CD8-positive, alpha-beta memory T cell (primary cell): ENCODE measurements at regions of chr4 and their contacts with region 1.

Region 1: DNA sequence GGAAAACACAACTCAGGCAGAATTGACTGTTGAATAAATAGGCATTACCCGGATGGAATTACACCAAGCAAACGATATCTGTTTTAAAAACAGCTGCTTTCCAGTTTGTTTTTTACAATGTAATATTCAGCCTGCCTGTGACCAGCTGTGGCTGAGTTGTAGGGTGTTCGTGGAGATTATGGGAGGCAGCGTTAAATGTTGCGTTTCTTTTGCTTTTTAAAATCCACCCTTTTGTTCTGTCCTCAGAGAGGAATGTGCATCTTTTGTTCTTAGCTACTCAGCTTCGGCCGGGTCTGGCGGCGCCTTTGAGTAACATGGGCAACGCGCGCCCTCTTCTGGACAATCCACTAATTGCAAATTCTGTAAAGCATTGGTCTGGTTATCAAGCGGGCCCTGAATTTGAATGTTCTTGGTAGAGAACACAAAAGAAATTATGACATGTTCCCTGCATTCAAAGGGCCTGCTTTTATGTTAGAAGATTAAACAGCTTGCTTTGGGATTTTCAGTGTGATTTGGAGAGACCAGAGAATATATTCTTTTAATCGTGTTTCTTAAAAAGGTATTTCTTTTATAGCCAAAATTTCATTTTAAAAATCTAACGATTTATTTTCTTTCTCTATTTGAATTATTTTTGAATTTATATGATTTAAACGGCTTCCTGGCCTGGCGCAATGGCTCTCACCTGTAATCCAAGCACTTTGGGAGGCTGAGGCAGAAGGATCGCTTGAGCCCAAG is 76.3 kb upstream of the TRIM2 start:
- DNase-seq: peak; percentile 71 to 83 (median 75)
- H3K4me3 ChIP-seq: no peak overlapping the region
- H3K4me3 Mint-ChIP-seq: no peak overlapping the region
- H3K27ac ChIP-seq: no peak overlapping the region
- H3K27ac Mint-ChIP-seq: peak overlapping the region in 2 of 8 donors; percentile 8 to 71
- H3K4me1 ChIP-seq: no peaks in the 10 kb centered on the region
- H3K4me1 Mint-ChIP-seq: peaks cover 2 to 5% (median 5%) of the 10 kb centered on the region in 3 donors
- H3K27me3 ChIP-seq: no peaks in the 10 kb centered on the region
- H3K27me3 Mint-ChIP-seq: no peaks in the 10 kb centered on the region

Region 2: GRCh38 chr4:152779513-152780266 is 348.2 kb before region 1 on chr4 and contains the starts of genes ARFIP1 and TIGD4:
- CTCF ChIA-PET with region 1: interaction called, 12 read pairs
- POLR2A ChIA-PET with region 1: no interaction called
- DNase-seq: peak; percentile 89 to 96 (median 93)
- H3K4me3 ChIP-seq: peak within 1 kb of the TSS; percentile 81
- H3K4me3 Mint-ChIP-seq: peak within 1 kb of the TSS; percentile 95 to 100 (median 99)
- H3K27ac ChIP-seq: peak within 1 kb of the TSS; percentile 84
- H3K27ac Mint-ChIP-seq: peak within 1 kb of the TSS; percentile 92 to 99 (median 98)
- H3K4me1 ChIP-seq: peaks cover 25% of the 10 kb centered on the region
- H3K4me1 Mint-ChIP-seq: peaks cover 37 to 60% (median 54%) of the 10 kb centered on the region in 3 donors
- H3K27me3 ChIP-seq: no peaks in the 10 kb centered on the region
- H3K27me3 Mint-ChIP-seq: peaks cover 0 to 4% of the 10 kb centered on the region in 2 donors
- total RNA-seq, gene ARFIP1: 13.1 to 14.0 TPM
- total RNA-seq, gene TIGD4: 0.60 to 0.68 TPM

Region 3: DNA sequence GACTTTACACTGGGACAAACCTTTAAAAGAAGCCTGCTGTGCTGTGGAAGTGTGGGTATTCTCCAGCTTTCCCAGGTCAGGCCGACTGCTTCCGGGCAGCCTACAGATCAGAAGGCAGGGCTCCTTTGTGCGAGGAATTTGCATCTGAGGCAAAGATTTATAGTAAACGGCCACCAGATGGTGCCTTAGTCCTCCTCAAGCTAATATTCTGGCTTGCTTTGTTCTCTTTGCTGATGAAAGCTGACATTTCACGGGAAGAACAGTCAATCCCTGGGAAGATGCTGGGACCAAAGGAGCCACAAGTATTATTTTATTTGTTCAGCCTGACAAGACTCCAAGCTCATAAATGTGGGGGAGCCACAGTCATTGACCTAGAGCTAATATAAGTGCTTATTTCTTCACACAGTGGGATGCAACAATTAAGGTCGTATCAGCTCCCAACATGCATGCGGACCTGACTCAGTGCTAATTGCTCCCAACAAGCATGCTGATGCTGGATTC is 44.4 kb before region 1 on chr4:
- CTCF ChIA-PET with region 1: interaction called, 236 read pairs
- POLR2A ChIA-PET with region 1: interaction called, 11 read pairs
- DNase-seq: peak in 4 of 5 donors; percentile 22 to 59 (median 48)
- H3K4me3 ChIP-seq: no peak overlapping the region
- H3K4me3 Mint-ChIP-seq: peak overlapping the region in 6 of 7 donors; percentile 35 to 76 (median 54)
- H3K27ac ChIP-seq: no peak overlapping the region
- H3K27ac Mint-ChIP-seq: peak overlapping the region in 3 of 8 donors; percentile 43 to 84 (median 71)
- H3K4me1 ChIP-seq: peaks cover 41% of the 10 kb centered on the region
- H3K4me1 Mint-ChIP-seq: peaks cover 22 to 43% (median 30%) of the 10 kb centered on the region in 3 donors
- H3K27me3 ChIP-seq: no peaks in the 10 kb centered on the region
- H3K27me3 Mint-ChIP-seq: peaks cover 10 to 30% of the 10 kb centered on the region in 2 donors

Region 4: GRCh38 chr4:153095448-153096204 is 32.3 kb before region 1 on chr4:
- CTCF ChIA-PET with region 1: interaction called, 36 read pairs
- POLR2A ChIA-PET with region 1: no interaction called
- DNase-seq: no peak
- H3K4me3 ChIP-seq: no peak overlapping the region
- H3K4me3 Mint-ChIP-seq: no peak overlapping the region
- H3K27ac ChIP-seq: no peak overlapping the region
- H3K27ac Mint-ChIP-seq: peak overlapping the region in 1 of 8 donors; percentile 56
- H3K4me1 ChIP-seq: peaks cover 5% of the 10 kb centered on the region
- H3K4me1 Mint-ChIP-seq: peaks cover 3 to 11% (median 4%) of the 10 kb centered on the region in 3 donors
- H3K27me3 ChIP-seq: no peaks in the 10 kb centered on the region
- H3K27me3 Mint-ChIP-seq: peaks cover 0 to 2% of the 10 kb centered on the region in 2 donors

Region 5: GRCh38 chr4:153643406-153644383 is 515.8 kb after region 1 on chr4:
- CTCF ChIA-PET with region 1: interaction called, 14 read pairs
- POLR2A ChIA-PET with region 1: no interaction called
- DNase-seq: peak in 2 of 5 donors; percentile 44 to 60
- H3K4me3 ChIP-seq: no peak overlapping the region
- H3K4me3 Mint-ChIP-seq: peak overlapping the region in 2 of 7 donors; percentile 7 to 9
- H3K27ac ChIP-seq: no peak overlapping the region
- H3K27ac Mint-ChIP-seq: peak overlapping the region in 3 of 8 donors; percentile 5 to 41 (median 15)
- H3K4me1 ChIP-seq: peaks cover 4% of the 10 kb centered on the region
- H3K4me1 Mint-ChIP-seq: peaks cover 4 to 8% (median 6%) of the 10 kb centered on the region in 3 donors
- H3K27me3 ChIP-seq: no peaks in the 10 kb centered on the region
- H3K27me3 Mint-ChIP-seq: peaks cover 0 to 2% of the 10 kb centered on the region in 2 donors